PC-3 (cell line): ENCODE measurements at regions of chr3 and their contacts with region 1.

Region 1: DNA sequence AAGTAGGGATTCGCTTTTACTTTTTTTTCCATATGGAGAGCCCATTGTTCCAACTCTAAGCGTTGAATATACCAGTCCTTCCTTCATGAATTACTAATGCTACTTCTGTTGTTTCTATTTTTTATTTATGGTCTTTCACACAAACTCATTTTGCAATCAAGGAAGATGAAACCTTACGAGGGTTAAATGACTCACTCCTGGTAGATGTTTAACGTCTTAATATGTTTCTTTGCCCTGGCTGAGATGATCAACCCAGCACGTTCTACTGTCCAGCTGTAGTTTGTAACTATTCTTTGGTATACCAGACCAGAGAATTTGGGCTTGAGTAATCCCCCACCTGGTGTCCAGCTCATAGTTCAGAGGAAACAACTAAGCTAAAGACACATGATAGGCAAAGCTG is 23.1 kb downstream of the CDCP1 start:
- DNase-seq: peak; percentile 97
- ATAC-seq: peak; percentile 47
- H3K4me3 ChIP-seq: peak overlapping the region; percentile 10; the same call in 1 of the 2 replicates
- H3K27ac ChIP-seq: peak overlapping the region; percentile 100
- H3K4me1 ChIP-seq: peaks cover 96% of the 10 kb centered on the region
- H3K27me3 ChIP-seq: no peaks in the 10 kb centered on the region
- CTCF ChIP-seq: no peak

Region 2: GRCh38 chr3:44252332-44252959 is 870.6 kb before region 1 on chr3:
- CTCF ChIA-PET with region 1: no interaction called
- POLR2A ChIA-PET with region 1: no interaction called
- intact Hi-C with region 1: no loop called
- DNase-seq: no peak
- ATAC-seq: no peak
- H3K4me3 ChIP-seq: no peak overlapping the region
- H3K27ac ChIP-seq: no peak overlapping the region
- H3K4me1 ChIP-seq: no peaks in the 10 kb centered on the region
- H3K27me3 ChIP-seq: no peaks in the 10 kb centered on the region
- CTCF ChIP-seq: 0 out of 2 replicates have a peak, but pooled peaks have one; percentile 15

Region 3: GRCh38 chr3:44772099-44772442 is 351.0 kb before region 1 on chr3:
- CTCF ChIA-PET with region 1: no interaction called
- POLR2A ChIA-PET with region 1: no interaction called
- intact Hi-C with region 1: no loop called
- DNase-seq: no peak
- ATAC-seq: no peak
- H3K4me3 ChIP-seq: no peak overlapping the region
- H3K27ac ChIP-seq: no peak overlapping the region
- H3K4me1 ChIP-seq: no peaks in the 10 kb centered on the region
- H3K27me3 ChIP-seq: no peaks in the 10 kb centered on the region
- CTCF ChIP-seq: no peak

Region 4: DNA sequence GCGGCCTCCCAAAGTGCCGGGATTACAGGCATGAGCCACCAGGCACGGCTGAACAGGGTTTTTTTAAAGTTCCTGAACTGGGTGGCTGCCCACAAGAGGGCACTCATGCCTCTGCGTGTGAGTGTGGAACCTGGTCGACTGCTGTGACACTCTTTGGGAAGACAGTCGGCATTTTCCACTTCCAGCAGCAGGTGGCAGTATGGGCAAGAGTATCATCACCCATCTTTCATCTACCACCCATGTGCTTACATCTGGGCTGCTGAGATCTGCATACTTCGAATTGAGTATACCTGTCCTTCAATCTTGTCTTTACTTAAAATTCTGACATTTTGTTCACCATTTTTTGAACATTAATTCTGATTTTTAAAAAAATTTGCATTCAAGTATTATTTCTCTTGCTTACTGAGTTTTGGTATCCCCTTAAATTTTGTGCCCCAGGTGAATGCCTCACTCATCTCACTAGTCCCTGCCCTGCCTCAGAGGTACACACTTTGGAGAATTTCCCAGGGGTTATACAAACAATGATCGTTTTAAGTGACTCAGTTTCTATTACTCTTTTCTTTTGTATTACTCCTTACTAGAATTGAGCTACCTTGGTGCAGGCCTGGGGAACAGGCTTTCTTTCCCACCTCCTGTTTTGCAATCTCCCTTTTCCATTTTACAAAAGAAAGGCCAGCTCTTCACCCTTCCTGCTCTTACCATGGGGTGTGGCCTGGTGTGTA is 85.1 kb before region 1 on chr3:
- CTCF ChIA-PET with region 1: interaction called, 13 read pairs
- POLR2A ChIA-PET with region 1: interaction called, 8 read pairs
- intact Hi-C with region 1: loop called (anchors 1 kb)
- DNase-seq: peak; percentile 98
- ATAC-seq: peak; percentile 77
- H3K4me3 ChIP-seq: peak overlapping the region; percentile 40; the same call in 1 of the 2 replicates
- H3K27ac ChIP-seq: no peak overlapping the region
- H3K4me1 ChIP-seq: peaks cover 29% of the 10 kb centered on the region
- H3K27me3 ChIP-seq: no peaks in the 10 kb centered on the region
- CTCF ChIP-seq: peak; percentile 97

Region 5: DNA sequence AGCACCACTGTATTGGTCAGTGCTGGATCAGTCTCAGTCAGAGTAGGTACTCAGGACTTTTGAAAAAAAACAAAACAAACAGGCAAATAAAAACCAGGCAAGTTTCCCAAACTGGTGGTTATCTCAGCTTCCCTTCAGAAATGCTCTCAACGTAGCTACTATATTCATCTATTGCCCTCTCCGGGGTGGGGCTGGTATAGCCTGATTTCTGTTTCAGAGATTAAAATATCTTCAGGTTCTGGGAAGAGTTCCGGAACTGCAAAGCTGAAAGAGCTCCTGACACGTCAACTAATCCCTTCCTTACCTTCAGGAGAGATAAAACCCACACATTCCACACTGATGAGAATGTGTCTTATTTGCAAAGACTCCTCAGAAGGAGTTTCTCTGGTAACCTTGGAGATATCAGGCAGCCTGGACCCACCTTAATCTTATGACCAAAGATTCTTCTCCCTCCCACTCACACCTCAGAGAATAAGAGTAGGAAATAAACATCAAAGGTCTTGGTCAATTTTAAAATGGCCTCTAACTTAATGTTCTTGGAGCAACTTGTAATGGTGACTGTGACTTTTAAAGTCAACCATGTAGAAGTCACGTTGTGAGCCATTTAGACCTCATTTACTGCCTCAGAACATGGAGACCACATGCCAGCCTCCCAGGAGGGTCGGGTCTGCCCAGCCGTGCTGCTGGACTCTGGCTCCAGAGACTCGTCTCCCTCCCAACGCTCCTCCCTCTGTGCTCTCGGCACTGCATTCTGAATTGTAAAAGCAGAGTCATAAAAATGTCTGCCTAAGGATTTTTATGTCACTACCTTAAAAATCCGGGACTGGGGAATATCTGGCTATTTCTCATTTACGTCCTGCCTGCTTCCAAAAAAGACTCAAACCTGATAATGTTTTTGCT is 30.6 kb before region 1 on chr3:
- CTCF ChIA-PET with region 1: interaction called, 9 read pairs
- POLR2A ChIA-PET with region 1: interaction called, 21 read pairs
- intact Hi-C with region 1: loop called (anchors 1 kb)
- DNase-seq: peak; percentile 98
- ATAC-seq: peak; percentile 91
- H3K4me3 ChIP-seq: no peak overlapping the region
- H3K27ac ChIP-seq: peak overlapping the region; percentile 94
- H3K4me1 ChIP-seq: peaks cover 54% of the 10 kb centered on the region
- H3K27me3 ChIP-seq: no peaks in the 10 kb centered on the region
- CTCF ChIP-seq: peak; percentile 47; the same call in 1 of the 2 replicates

Region 6: GRCh38 chr3:45134758-45135521 is 11.9 kb after region 1 on chr3:
- CTCF ChIA-PET with region 1: interaction called, 3 read pairs
- POLR2A ChIA-PET with region 1: interaction called, 23 read pairs
- intact Hi-C with region 1: loop called (anchors 1 kb)
- DNase-seq: no peak
- ATAC-seq: no peak
- H3K4me3 ChIP-seq: no peak overlapping the region
- H3K27ac ChIP-seq: peak overlapping the region; percentile 93
- H3K4me1 ChIP-seq: peaks cover 79% of the 10 kb centered on the region
- H3K27me3 ChIP-seq: no peaks in the 10 kb centered on the region
- CTCF ChIP-seq: no peak

Region 7: DNA sequence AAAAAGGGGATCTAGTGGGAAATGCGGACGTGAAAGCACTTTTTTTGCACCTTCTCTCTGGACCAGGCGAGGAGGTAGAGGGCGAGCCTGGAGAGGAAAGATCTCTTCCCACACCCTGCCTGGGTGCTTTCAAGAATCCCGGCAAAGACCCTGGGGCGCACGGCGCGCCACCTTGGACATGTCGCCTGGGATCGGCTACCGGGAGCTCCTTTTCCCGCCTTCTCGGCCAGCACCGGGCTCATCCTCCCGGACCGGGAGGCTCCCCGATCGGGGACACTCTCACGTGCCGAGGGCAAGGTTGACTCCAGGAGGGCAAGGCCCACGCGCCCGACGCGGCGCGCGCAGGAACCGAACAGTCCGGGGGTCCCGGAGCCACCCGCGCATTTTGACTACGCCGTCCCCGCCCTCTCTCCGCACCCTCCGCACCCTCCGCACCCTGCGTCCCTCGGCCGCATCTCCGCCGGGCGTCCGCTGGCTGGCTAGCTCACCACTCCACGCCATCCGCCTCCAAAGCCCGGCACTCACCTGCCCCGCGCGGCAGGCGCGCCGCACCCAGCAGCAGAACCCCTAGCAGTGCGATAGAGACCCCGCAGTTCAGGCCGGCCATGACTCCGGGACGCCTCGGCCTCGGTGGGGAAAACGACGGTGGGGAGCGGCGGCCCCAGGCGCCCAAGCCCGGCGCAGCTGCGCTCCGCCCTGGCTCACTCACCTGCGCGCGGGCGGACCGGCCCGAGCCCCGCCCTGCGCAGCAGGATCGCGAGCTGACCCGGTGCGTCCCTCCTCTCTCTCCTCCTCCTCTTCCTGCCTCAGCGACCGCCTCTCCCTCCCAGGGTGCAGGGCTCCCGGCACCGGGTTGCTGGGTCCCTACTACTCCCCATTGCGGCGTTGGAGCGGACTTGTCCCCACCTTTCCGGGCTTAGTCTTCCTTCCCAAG is 22.9 kb after region 1 on chr3 and contains the start of gene CDCP1:
- CTCF ChIA-PET with region 1: no interaction called
- POLR2A ChIA-PET with region 1: interaction called, 12 read pairs
- intact Hi-C with region 1: loop called (anchors 1 kb)
- DNase-seq: peak; percentile 81
- ATAC-seq: peak; percentile 93
- H3K4me3 ChIP-seq: peak within 1 kb of the TSS; percentile 98
- H3K27ac ChIP-seq: peak within 1 kb of the TSS; percentile 84
- H3K4me1 ChIP-seq: peaks cover 43% of the 10 kb centered on the region
- H3K27me3 ChIP-seq: no peaks in the 10 kb centered on the region
- CTCF ChIP-seq: no peak
- total RNA-seq, gene CDCP1: 120 and 124 TPM in 2 replicates

Region 8: DNA sequence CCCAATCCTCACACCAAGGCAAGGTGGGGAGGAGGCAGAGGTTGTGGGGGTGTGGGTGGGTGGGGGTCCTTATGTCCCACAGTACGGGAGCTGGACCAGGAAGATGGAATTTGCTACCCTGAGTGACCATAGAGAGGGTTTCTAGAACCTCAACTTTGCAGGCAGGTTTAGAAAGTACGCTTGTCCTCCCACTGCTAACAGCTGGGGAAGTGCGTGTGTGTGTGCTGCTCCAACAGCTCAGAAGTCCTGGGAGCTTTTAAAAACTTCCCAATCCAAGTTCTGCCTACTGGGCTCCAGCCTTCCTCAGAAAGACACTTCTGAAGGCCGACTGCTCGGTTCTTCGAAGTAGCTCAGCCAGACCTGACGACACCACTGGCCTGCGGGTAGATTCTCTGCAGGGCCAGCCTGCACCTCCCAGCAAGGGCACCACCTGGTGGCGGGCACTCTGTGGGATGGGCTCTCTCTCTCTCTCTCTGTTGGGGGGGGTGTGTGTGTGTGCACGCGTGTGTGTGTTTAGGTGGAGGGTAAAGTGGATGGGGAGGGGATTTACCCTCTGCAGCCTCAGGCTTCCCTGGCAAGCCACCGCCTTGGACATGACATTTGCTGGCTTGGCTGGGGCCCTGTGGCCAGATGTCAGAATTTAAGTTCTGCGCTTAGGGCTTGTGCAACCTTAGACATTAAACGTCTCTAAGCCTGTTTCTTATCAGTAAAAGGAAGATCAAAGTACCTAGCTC is 87.4 kb after region 1 on chr3:
- CTCF ChIA-PET with region 1: interaction called, 10 read pairs
- POLR2A ChIA-PET with region 1: interaction called, 6 read pairs
- intact Hi-C with region 1: no loop called
- DNase-seq: peak; percentile 92
- ATAC-seq: peak; percentile 98
- H3K4me3 ChIP-seq: no peak overlapping the region
- H3K27ac ChIP-seq: no peak overlapping the region
- H3K4me1 ChIP-seq: peaks cover 13% of the 10 kb centered on the region
- H3K27me3 ChIP-seq: no peaks in the 10 kb centered on the region
- CTCF ChIP-seq: peak; percentile 92